ENCODE measurements at regions of chr18 and their contacts with region 1.

Region 1: DNA sequence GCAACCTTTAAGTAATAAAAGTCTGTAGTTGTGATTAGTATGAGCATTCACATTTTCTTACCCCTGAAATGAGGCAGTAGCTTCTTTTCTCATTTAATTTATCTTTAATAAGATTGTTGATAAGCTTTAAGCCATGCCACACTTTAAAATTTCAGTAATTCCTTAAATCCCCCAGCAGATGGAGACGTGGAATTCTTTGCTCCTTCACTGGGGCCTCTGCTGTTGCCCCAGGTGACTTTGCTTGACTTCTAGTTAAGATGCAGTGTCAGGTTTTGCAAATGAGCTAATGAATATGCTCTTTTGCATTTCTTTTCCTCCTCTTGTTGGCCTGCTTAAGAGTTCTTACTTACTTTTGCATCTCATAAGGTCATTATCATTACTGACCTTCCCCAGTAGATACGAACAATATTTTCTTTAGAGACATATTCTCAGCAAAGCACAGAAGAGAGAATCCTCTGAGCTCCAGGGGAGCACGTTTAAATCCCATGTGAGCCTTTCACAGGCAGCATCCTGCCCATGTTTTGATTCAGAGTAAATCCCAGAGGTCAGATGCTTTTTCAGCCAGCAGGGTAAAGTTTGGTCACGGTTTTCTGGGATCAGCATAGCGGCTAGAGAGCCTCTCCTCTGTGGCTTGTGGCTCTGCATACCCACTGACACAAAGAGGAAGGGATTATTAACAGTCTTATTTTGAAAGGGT is 222.9 kb downstream of the PTPRM start:
- DNase-seq: no peak
- H3K4me3 ChIP-seq: no peak overlapping the region
- CTCF ChIP-seq: peak; percentile 46

Region 2: DNA sequence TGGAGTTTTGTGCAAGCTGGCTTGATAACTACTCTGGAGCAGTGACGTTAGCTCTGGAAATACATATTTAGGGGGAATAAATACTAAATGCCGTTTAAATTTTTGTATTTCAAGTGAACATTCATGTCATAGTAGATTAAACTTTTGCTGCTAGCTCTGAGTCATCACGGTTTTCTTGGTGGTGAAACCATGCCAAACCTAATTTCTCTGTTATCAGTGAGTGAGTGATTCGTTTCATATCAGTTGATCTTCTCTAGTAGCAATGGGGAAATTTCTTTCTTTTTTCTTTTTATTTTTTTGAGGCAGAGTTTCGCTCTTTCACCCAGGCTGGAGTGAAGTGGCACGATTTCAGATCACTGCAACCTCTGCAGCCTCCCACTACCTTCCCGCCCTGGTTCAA is 11.8 kb before region 1 on chr18:
- CTCF ChIA-PET with region 1: interaction called, 15 read pairs
- POLR2A ChIA-PET with region 1: no interaction called
- DNase-seq: no peak
- H3K4me3 ChIP-seq: no peak overlapping the region
- CTCF ChIP-seq: no peak

Region 3: GRCh38 chr18:7805880-7806279 is 15.9 kb after region 1 on chr18:
- CTCF ChIA-PET with region 1: interaction called, 51 read pairs
- POLR2A ChIA-PET with region 1: no interaction called
- DNase-seq: no peak
- H3K4me3 ChIP-seq: no peak overlapping the region
- CTCF ChIP-seq: no peak

Region 4: GRCh38 chr18:7812431-7813063 is 22.5 kb after region 1 on chr18:
- CTCF ChIA-PET with region 1: interaction called, 51 read pairs
- POLR2A ChIA-PET with region 1: no interaction called
- DNase-seq: peak; percentile 61
- H3K4me3 ChIP-seq: no peak overlapping the region
- CTCF ChIP-seq: no peak

Region 5: GRCh38 chr18:8084160-8084559 is 294.2 kb after region 1 on chr18:
- CTCF ChIA-PET with region 1: interaction called, 11 read pairs
- POLR2A ChIA-PET with region 1: no interaction called
- DNase-seq: no peak
- H3K4me3 ChIP-seq: no peak overlapping the region
- CTCF ChIP-seq: peak; percentile 57

Region 6: GRCh38 chr18:8389391-8390340 is 599.7 kb after region 1 on chr18:
- CTCF ChIA-PET with region 1: interaction called, 51 read pairs
- POLR2A ChIA-PET with region 1: no interaction called
- DNase-seq: peak; percentile 17
- H3K4me3 ChIP-seq: no peak overlapping the region
- CTCF ChIP-seq: peak; percentile 85

Region 7: DNA sequence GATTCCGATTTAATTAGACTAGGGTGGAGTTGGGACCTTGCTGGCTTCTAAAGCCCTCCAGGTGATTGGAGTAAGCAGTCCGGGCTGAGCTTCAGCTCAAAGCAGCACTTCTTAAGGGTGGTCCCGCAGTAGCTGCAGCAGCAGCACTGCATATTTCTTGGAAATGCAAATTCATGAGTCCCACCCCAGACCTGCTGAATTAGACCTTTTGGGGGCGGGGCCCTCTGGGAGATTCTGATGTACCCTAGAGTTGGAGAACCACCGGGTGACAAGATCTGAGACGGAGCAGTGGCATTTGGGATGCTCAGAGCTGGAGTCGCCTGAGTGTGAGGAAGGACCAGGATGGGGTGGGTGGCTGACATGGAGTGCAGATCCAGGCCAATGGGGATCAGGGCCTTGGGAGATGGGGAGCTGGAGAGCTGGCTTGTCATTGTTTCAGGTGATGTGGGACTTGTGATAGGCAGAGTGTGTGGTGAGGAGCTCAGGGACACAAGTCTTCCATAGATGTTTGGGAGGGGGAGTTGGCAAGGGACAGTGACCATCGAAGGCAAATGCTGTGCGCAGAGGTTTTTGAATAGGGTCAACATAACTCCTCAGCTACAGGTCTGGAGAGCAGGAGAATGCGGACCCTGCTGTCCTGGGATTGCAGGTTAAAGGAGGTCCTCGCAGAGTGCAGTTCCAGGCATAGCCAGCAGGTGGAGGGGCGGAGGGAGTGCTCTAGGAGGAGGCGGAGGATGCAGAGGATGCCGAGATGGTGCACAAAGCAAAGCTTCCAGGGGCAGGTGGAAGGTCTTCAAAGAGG is 688.4 kb after region 1 on chr18:
- CTCF ChIA-PET with region 1: interaction called, 63 read pairs
- POLR2A ChIA-PET with region 1: no interaction called
- DNase-seq: no peak
- H3K4me3 ChIP-seq: no peak overlapping the region
- CTCF ChIP-seq: peak; percentile 98